ENCODE measurements at regions of chr11 and their contacts with region 1.

Region 1: GRCh38 chr11:111977146-111978027 is 40.2 kb downstream of the DIXDC1 start:
- DNase-seq: peak; percentile 56 to 70 (median 62)
- ATAC-seq: peak; percentile 57
- H3K4me3 ChIP-seq: peak overlapping the region in 1 of 2 donors; percentile 24
- H3K27ac ChIP-seq: peak overlapping the region; percentile 43 to 69 (median 52)
- H3K4me1 ChIP-seq: peaks cover 23% of the 10 kb centered on the region
- H3K27me3 ChIP-seq: no peaks in the 10 kb centered on the region
- CTCF ChIP-seq: no peak
- POLR2A ChIP-seq: peak; percentile 17 to 23 (median 18)

Region 2: DNA sequence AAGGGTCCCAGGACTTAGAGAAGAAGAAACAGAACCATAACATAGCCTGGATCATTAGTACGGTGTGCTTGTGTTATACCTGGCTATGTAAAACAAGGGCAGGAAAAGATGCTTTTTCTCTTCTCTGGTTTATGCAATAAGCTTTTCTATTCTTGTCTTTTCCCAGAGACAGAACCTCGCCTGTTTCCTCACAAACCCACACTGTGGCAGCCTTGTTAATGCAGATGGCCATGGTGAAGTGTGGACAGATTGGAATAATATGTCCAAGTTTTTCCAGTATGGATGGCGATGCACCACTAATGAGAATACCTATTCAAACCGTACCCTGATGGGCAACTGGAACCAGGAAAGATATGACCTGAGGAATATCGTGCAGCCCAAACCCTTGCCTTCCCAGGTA is 95.2 kb before region 1 on chr11:
- intact Hi-C with region 1: loop called (anchors 5 kb)
- DNase-seq: no peak
- ATAC-seq: no peak
- H3K4me3 ChIP-seq: no peak overlapping the region
- H3K27ac ChIP-seq: no peak overlapping the region
- H3K4me1 ChIP-seq: peaks cover 9% of the 10 kb centered on the region
- H3K27me3 ChIP-seq: no peaks in the 10 kb centered on the region
- CTCF ChIP-seq: no peak
- POLR2A ChIP-seq: no peak

Region 3: DNA sequence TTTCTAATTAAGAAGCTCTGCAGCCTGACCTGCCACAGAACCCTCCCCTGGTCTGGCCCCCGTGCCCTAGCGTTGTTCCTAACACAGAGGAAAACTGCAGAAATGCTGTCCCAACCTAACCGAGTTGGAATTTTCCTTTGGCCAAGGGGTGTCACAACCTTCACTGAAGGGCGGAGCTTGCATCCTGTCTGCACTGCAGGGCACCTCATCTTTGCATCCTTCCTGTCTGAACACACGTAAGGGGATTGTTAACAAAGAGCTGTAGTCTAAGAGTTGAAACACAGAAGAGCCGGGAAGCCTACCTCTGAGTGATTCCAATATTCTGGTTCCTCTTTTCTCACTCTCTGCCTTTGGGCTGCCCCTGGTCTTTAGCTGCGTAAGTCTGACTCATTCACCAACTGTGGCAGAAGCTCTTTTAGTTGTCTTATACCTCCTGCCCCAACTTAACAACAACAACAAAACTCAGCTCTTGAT is 38.7 kb before region 1 on chr11:
- intact Hi-C with region 1: loop called (anchors 5 kb)
- DNase-seq: no peak
- ATAC-seq: no peak
- H3K4me3 ChIP-seq: no peak overlapping the region
- H3K27ac ChIP-seq: no peak overlapping the region
- H3K4me1 ChIP-seq: peaks cover 14% of the 10 kb centered on the region
- H3K27me3 ChIP-seq: no peaks in the 10 kb centered on the region
- CTCF ChIP-seq: no peak
- POLR2A ChIP-seq: no peak

Region 4: DNA sequence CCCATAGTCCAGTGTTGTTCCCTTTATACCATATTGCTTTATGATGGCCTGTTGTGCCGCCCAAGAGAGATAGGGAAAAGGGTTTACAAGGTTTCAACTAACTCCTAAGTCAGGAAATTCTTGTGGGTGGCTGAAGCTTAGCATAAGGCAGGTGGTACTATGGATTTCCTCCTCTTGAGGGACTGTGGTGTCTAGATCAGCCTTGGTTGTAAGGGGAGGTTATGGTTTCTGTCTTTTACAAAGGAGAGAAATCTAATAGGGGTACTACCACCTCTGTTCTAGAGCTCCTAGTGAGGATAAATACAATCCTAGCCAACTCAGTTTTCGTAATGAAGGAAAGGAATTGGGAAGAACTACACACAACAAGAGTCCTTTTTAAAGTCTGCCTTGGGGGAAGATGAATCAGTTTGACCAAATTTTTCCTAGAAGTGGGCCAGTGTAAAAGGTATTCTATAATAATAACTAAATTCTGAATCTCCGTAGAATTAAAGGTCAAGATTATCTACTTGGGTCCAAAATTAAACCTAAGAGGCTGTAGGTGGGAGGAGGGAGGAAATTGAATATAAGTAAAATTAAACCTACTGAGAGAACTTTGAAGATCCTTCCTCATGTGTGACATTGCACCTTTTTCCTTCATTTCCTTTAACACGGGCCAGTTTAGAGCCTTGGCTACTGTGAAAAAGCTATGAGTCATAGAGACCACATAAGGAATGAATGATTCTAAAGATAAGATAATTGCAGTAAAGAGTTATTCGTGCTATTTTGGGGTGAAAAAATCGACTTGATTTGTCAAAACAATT is 65.0 kb after region 1 on chr11:
- intact Hi-C with region 1: no loop called
- DNase-seq: no peak
- ATAC-seq: no peak
- H3K4me3 ChIP-seq: no peak overlapping the region
- H3K27ac ChIP-seq: no peak overlapping the region
- H3K4me1 ChIP-seq: peaks cover 3% of the 10 kb centered on the region
- H3K27me3 ChIP-seq: no peaks in the 10 kb centered on the region
- CTCF ChIP-seq: no peak
- POLR2A ChIP-seq: no peak

Measured in body of pancreas (tissue), 4 donors.